HEK293 (cell line): ENCODE measurements at regions of chr20 and their contacts with region 1.

Region 1: GRCh38 chr20:4069751-4070150 is 54.4 kb upstream of the RNF24 start:
- H3K4me3 ChIP-seq: no peak overlapping the region
- H3K27ac ChIP-seq: no peak overlapping the region
- H3K4me1 ChIP-seq: peaks cover 3% of the 10 kb centered on the region
- CTCF ChIP-seq: no peak

Region 2: DNA sequence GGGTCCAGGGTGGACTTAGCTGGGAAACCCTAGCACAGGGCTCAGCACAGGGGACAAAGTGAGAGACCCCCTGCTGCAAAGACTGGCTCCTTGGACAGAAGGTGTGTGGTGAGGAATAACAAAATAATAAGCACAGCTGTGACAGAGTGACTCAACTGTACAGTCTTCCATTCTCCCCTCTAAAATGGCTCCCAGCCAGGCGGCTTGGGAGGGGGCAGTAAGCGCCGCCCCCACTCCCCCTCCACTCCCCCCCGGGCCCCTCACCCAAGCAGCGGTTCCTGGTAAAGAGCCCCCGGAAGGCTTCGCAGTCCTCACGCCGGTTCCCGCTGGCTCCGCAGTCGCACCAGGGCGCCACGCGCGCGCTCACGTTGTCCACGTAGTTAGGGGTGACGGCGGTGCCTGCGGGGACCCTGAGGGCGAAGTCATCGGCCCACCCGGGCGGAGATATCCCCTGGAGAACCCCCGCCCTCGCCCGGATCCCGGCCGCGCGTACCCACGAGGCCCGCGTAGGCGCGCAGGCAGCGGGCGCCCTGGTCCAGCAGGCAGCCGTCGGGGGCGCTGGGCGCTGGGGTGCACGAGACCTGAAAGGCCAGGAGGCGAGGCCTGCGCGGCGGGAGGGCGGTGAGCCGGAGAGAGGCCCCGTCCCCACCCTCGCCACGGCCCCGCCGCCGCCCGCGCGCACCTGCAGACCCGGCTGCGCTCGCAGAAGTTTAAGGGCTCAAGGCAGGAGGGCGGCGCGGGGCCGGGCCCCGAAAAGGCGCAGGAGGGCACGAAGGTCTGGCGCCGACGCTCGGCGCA is 409.3 kb before region 1 on chr20:
- CTCF ChIA-PET with region 1: no interaction called
- POLR2A ChIA-PET with region 1: no interaction called
- H3K4me3 ChIP-seq: no peak overlapping the region
- H3K27ac ChIP-seq: no peak overlapping the region
- H3K4me1 ChIP-seq: no peaks in the 10 kb centered on the region
- CTCF ChIP-seq: no peak

Region 3: GRCh38 chr20:3888622-3889488 is 180.9 kb before region 1 on chr20 and contains the start of gene PANK2:
- CTCF ChIA-PET with region 1: interaction called, 17 read pairs
- POLR2A ChIA-PET with region 1: interaction called, 8 read pairs
- H3K4me3 ChIP-seq: peak within 1 kb of the TSS; percentile 74
- H3K27ac ChIP-seq: peak within 1 kb of the TSS; percentile 97
- H3K4me1 ChIP-seq: peaks cover 30% of the 10 kb centered on the region
- CTCF ChIP-seq: peak; percentile 94

Region 4: GRCh38 chr20:4006640-4007039 is 63.1 kb before region 1 on chr20:
- CTCF ChIA-PET with region 1: interaction called, 90 read pairs
- POLR2A ChIA-PET with region 1: no interaction called
- H3K4me3 ChIP-seq: no peak overlapping the region
- H3K27ac ChIP-seq: peak overlapping the region; percentile 35
- H3K4me1 ChIP-seq: peaks cover 16% of the 10 kb centered on the region
- CTCF ChIP-seq: no peak

Region 5: GRCh38 chr20:4045741-4046140 is 24.0 kb before region 1 on chr20:
- CTCF ChIA-PET with region 1: interaction called, 35 read pairs
- POLR2A ChIA-PET with region 1: interaction called, 3 read pairs
- H3K4me3 ChIP-seq: no peak overlapping the region
- H3K27ac ChIP-seq: no peak overlapping the region
- H3K4me1 ChIP-seq: peaks cover 13% of the 10 kb centered on the region
- CTCF ChIP-seq: no peak

Region 6: GRCh38 chr20:4082406-4083097 is 12.8 kb after region 1 on chr20:
- CTCF ChIA-PET with region 1: interaction called, 65 read pairs
- POLR2A ChIA-PET with region 1: interaction called, 4 read pairs
- H3K4me3 ChIP-seq: no peak overlapping the region
- H3K27ac ChIP-seq: no peak overlapping the region
- H3K4me1 ChIP-seq: peaks cover 4% of the 10 kb centered on the region; the same call in 1 of the 2 replicates
- CTCF ChIP-seq: no peak

Region 7: DNA sequence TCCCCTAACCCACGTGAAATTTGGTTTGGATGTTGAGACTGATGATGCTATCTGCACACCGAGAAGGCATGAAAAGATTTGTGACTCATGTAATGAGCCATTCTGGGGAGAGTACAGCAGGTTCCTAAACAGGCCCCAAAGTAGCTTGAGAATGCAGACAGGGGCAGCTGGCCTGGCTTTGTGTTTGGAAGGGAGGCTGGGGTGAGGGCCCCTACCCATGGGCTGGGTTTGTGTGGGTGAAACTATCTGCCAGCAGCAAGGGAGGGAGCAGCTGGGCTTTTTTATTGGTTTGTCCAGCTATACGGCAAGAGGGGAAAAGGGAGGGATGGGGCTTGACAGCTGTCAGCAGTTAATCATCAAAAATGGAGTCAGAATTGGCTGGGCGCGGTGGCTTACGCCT is 32.6 kb after region 1 on chr20:
- CTCF ChIA-PET with region 1: no interaction called
- POLR2A ChIA-PET with region 1: no interaction called
- H3K4me3 ChIP-seq: no peak overlapping the region
- H3K27ac ChIP-seq: no peak overlapping the region
- H3K4me1 ChIP-seq: no peaks in the 10 kb centered on the region
- CTCF ChIP-seq: no peak